Activated CD8-positive, alpha-beta T cell treated with anti-CD3 and anti-CD28 coated beads, Interleukin-2, amount 10 ng/mL, durations not matched to agents 7 days and 5 days (primary cell): ENCODE measurements at regions of chr12 and their contacts with region 1.

Region 1: DNA sequence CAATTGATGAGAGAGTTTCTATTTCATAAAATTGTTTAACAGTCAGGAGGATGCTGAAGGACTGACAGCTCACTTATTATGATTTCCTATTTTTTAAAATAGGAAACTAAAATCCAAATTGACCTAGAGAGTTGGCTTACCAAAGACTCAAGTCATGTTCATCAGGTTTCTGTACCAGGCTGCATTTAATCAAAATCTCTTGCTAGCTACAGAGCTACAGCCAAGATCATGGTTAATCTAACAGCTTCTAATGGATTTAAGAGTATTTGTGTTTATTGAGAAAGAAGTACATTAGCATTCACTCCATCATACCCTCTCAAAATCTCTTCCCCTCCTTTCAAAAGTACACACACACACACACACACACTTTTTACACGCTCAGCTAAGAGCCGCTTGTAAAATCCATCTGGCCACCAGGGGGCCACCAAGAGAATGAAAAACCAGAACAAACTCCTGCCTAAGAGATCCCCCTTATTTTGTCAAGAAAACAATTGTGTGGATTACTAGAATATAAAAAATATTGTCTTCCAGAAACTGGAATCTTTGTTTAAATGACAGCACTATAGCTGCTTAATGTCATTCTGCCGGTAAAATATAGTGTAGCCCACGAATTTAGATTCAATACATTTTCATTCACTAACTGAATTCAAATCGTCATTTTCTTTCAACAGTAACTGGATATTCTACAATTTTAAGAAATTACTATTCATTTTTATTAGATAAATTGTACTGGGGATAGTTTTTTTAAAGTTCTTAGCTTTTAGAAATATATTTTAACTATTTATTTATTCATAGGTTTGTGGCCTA is 334.0 kb downstream of the BTG1 start:
- DNase-seq: peak; percentile 72
- ATAC-seq: peak; percentile 44
- H3K4me3 Mint-ChIP-seq: no peak overlapping the region
- H3K27ac Mint-ChIP-seq: no peak overlapping the region
- H3K4me1 Mint-ChIP-seq: peaks cover 11% of the 10 kb centered on the region
- H3K27me3 Mint-ChIP-seq: no peaks in the 10 kb centered on the region

Region 2: GRCh38 chr12:91722072-91722471 is 89.6 kb before region 1 on chr12:
- CTCF ChIA-PET with region 1: no interaction called
- POLR2A ChIA-PET with region 1: no interaction called
- DNase-seq: peak; percentile 23
- ATAC-seq: no peak
- H3K4me3 Mint-ChIP-seq: no peak overlapping the region
- H3K27ac Mint-ChIP-seq: no peak overlapping the region
- H3K4me1 Mint-ChIP-seq: no peaks in the 10 kb centered on the region
- H3K27me3 Mint-ChIP-seq: no peaks in the 10 kb centered on the region

Region 3: DNA sequence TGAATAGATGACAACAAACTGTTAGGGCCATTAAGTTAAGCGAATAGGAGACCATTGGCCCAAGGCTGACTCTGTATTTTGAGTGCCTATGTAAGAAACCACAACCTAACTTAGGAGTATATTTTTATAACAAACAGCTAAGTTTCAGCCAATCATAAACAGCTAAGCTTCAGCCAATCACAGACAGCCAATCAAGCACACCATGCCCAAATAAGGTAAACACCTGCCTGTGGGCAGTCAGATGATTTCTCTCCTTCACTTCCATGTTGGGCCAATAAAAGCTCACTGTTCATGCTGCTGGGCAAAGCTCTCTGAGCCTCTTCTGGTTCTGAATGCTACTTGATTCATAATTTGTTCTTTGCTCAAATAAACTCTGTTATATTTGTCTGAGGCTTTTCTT is 10.6 kb before region 1 on chr12:
- CTCF ChIA-PET with region 1: interaction called, 17 read pairs
- POLR2A ChIA-PET with region 1: no interaction called
- DNase-seq: no peak
- ATAC-seq: no peak
- H3K4me3 Mint-ChIP-seq: no peak overlapping the region
- H3K27ac Mint-ChIP-seq: no peak overlapping the region
- H3K4me1 Mint-ChIP-seq: peaks cover 3% of the 10 kb centered on the region
- H3K27me3 Mint-ChIP-seq: no peaks in the 10 kb centered on the region

Region 4: GRCh38 chr12:91846466-91847055 is 34.9 kb after region 1 on chr12:
- CTCF ChIA-PET with region 1: interaction called, 18 read pairs
- POLR2A ChIA-PET with region 1: no interaction called
- DNase-seq: no peak
- ATAC-seq: no peak
- H3K4me3 Mint-ChIP-seq: no peak overlapping the region
- H3K27ac Mint-ChIP-seq: no peak overlapping the region
- H3K4me1 Mint-ChIP-seq: peaks cover 2% of the 10 kb centered on the region
- H3K27me3 Mint-ChIP-seq: no peaks in the 10 kb centered on the region

Region 5: GRCh38 chr12:91913651-91914050 is 102.0 kb after region 1 on chr12:
- CTCF ChIA-PET with region 1: no interaction called
- POLR2A ChIA-PET with region 1: no interaction called
- DNase-seq: no peak
- ATAC-seq: no peak
- H3K4me3 Mint-ChIP-seq: no peak overlapping the region
- H3K27ac Mint-ChIP-seq: no peak overlapping the region
- H3K4me1 Mint-ChIP-seq: no peaks in the 10 kb centered on the region
- H3K27me3 Mint-ChIP-seq: no peaks in the 10 kb centered on the region

Region 6: GRCh38 chr12:92030618-92031017 is 218.9 kb after region 1 on chr12:
- CTCF ChIA-PET with region 1: interaction called, 14 read pairs
- POLR2A ChIA-PET with region 1: no interaction called
- DNase-seq: peak; percentile 79
- ATAC-seq: peak; percentile 98
- H3K4me3 Mint-ChIP-seq: peak overlapping the region; percentile 72
- H3K27ac Mint-ChIP-seq: peak overlapping the region; percentile 89
- H3K4me1 Mint-ChIP-seq: peaks cover 74% of the 10 kb centered on the region
- H3K27me3 Mint-ChIP-seq: no peaks in the 10 kb centered on the region

Region 7: GRCh38 chr12:92570056-92570753 is 758.5 kb after region 1 on chr12:
- CTCF ChIA-PET with region 1: interaction called, 12 read pairs
- POLR2A ChIA-PET with region 1: no interaction called
- DNase-seq: peak; percentile 71
- ATAC-seq: peak; percentile 85
- H3K4me3 Mint-ChIP-seq: no peak overlapping the region
- H3K27ac Mint-ChIP-seq: no peak overlapping the region
- H3K4me1 Mint-ChIP-seq: peaks cover 12% of the 10 kb centered on the region
- H3K27me3 Mint-ChIP-seq: no peaks in the 10 kb centered on the region